GM12878 (cell line): ENCODE measurements at regions of chr4 and their contacts with region 1.

Region 1: DNA sequence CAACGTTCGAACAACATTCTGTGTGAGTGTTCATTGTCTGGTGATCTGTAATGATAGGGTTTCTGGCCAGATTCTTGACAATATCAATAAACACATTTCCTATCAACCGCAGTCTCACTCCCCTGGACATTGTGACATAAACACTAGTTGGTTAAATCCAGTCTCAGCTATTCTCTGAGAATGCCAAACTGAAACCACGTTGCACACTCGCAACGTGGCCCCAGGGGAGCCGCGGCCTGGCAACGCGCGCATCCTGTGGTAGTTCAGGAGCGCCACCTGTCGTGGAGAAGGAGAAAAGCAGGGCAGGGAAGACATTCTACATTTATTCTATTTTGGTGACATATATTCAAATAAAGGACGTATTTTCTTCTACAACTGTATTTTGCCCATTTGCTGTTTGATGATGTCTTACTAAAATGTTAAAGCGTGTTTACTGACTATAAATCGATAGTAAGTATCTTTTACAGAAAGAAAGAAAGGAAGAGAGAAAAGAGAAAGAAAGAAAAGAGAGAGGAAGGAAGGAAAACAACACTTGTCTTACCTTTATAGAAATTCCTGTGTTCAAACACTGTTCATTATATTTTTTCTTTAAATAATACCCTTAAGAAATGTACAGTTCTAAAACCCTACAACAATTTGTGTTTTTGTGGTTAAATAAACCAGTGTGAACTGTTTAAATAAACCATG is 738.3 kb upstream of the FRG1 start:
- DNase-seq: no peak
- ATAC-seq: peak; percentile 45
- H3K4me3 ChIP-seq: no peak overlapping the region
- H3K27ac ChIP-seq: no peak overlapping the region
- H3K4me1 ChIP-seq: no peaks in the 10 kb centered on the region
- H3K27me3 ChIP-seq: no peaks in the 10 kb centered on the region
- CTCF ChIP-seq: peak; percentile 29 to 59 (median 32); a peak in 4 of 6 replicates
- EP300 ChIP-seq: no peak
- POLR2A ChIP-seq: no peak
- RAD21 ChIP-seq: peak; percentile 58

Region 2: DNA sequence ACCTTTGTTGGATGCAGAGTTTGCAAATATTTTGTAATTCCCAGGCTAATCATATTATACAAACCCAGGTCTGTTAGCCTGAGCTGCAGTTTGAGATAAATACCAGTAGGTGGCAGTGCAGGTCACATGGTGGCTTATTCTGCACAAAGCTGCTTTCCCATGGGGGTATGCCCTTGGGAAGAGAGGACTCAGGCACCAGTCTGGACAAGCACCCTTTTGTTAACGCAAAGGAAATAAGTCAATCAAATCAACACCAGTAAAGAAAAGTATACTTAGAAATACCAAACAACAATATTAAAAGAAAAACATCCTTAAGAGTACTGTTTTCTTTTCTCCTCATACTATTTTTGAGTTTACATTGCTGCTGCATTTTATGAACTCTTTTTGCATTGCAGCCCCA is 1595.7 kb before region 1 on chr4:
- CTCF ChIA-PET with region 1: interaction called, 4 read pairs
- POLR2A ChIA-PET with region 1: no interaction called
- RAD21 ChIA-PET with region 1: no interaction called
- SMC1A ChIA-PET with region 1: interaction called, 3 read pairs
- in situ Hi-C with region 1: no loop called
- intact Hi-C with region 1: loop called (anchors 2 kb)
- DNase-seq: no peak
- ATAC-seq: peak; percentile 64; the same call in 2 of the 3 replicates
- H3K4me3 ChIP-seq: no peak overlapping the region
- H3K27ac ChIP-seq: no peak overlapping the region
- H3K4me1 ChIP-seq: no peaks in the 10 kb centered on the region
- H3K27me3 ChIP-seq: no peaks in the 10 kb centered on the region
- CTCF ChIP-seq: peak; percentile 53 to 64 (median 62); a peak in 5 of 6 replicates
- EP300 ChIP-seq: no peak
- POLR2A ChIP-seq: no peak
- RAD21 ChIP-seq: peak; percentile 71

Region 3: DNA sequence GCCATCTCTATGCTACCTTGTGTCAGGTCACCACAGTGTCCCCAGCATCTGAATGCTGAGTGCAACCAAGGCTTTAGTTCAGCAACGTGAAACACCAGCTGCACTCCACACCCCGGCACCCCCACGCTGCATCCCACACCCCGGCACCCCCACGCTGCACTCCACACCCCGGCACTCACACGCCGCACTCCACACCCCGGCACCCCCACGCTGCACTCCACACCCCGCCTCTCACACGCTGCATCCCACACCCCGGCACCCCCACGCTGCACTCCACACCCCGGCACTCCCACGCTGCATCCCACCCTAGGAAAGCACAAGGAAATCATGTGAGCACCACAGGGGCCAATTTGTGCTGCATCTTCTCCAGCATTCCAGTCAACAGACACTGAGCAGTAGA is 538.5 kb after region 1 on chr4:
- CTCF ChIA-PET with region 1: no interaction called
- POLR2A ChIA-PET with region 1: no interaction called
- RAD21 ChIA-PET with region 1: no interaction called
- SMC1A ChIA-PET with region 1: no interaction called
- in situ Hi-C with region 1: no loop called
- intact Hi-C with region 1: no loop called
- DNase-seq: no peak
- ATAC-seq: no peak
- H3K4me3 ChIP-seq: no peak overlapping the region
- H3K27ac ChIP-seq: no peak overlapping the region
- H3K4me1 ChIP-seq: no peaks in the 10 kb centered on the region
- H3K27me3 ChIP-seq: no peaks in the 10 kb centered on the region
- CTCF ChIP-seq: no peak
- EP300 ChIP-seq: no peak
- POLR2A ChIP-seq: no peak
- RAD21 ChIP-seq: no peak